ENCODE measurements at regions of chr17 and their contacts with region 1.

Region 1: DNA sequence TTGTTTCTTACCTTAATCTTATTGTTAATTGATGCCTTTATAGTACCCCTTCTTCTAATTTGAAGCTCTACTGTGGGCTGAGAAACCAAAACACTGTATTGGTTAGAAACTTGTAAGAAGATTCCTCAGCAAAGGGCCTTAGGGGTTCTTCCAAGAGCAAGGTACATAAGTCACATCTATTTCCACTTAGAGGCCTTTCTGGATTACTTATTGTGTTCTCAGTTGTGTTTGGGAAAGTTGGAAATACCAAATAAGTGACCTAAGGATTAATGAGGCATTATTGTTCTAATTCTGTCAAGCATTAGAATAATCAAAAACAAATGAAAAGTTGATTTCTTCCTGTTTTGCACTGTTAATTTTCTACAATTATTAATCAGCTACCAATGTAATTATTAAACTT is 85.8 kb downstream of the SKAP1 start:
- DNase-seq: no peak
- H3K4me3 ChIP-seq: no peak overlapping the region
- H3K27ac ChIP-seq: no peak overlapping the region
- H3K4me1 ChIP-seq: no peaks in the 10 kb centered on the region
- H3K27me3 ChIP-seq: no peaks in the 10 kb centered on the region
- CTCF ChIP-seq: no peak
- POLR2A ChIP-seq: no peak

Region 2: DNA sequence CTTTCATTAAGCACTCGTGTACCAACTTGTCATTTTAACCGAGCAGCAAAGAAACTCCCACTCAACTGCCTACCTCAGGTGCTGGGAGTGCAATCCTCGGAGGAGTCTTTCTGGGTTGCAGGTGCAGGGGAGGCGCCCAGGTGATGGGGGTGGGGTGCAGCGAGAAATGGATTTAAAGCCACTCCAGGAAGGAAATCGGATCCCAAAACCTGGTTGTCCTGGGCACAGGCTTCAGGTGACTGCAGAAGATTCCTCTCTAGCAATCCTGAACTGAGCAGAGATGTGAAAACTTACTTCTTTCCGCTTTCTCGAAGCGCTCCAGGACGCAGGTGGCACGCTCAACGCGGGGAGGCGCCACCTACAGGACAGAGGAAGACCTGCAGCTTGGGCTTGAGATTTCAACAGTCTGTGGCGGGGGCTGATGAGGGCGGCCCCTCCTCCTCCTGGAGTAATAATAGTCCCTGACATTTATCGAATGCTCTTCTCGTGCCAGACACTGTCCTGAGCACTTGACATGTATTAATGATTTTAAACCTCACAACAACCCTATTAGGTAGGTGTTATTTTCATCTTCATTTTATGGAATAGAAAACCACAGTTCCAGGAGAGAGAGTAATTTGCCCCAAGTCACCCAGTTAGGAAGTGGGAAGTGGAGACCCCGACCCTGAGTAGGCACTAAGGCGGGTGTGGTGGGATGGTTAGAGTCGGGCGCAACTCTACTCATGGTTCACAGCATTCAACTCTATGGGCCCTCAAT is 113.0 kb after region 1 on chr17:
- intact Hi-C with region 1: loop called in 1 of 2 experiments (anchors 5 kb)
- DNase-seq: peak; percentile 59 to 83 (median 74)
- H3K4me3 ChIP-seq: no peak overlapping the region
- H3K27ac ChIP-seq: no peak overlapping the region
- H3K4me1 ChIP-seq: peaks cover 0 to 11% of the 10 kb centered on the region in 2 donors
- H3K27me3 ChIP-seq: no peaks in the 10 kb centered on the region
- CTCF ChIP-seq: peak; percentile 89 to 98 (median 91)
- POLR2A ChIP-seq: no peak

Region 3: GRCh38 chr17:48593840-48594537 is 249.7 kb after region 1 on chr17:
- intact Hi-C with region 1: loop called (anchors 5 to 10 kb)
- DNase-seq: peak; percentile 77 to 91 (median 84)
- H3K4me3 ChIP-seq: peak overlapping the region in 2 of 4 donors; percentile 41 to 54
- H3K27ac ChIP-seq: peak overlapping the region in 3 of 5 donors; percentile 53 to 66 (median 62)
- H3K4me1 ChIP-seq: peaks cover 0 to 33% of the 10 kb centered on the region in 2 donors
- H3K27me3 ChIP-seq: no peaks in the 10 kb centered on the region
- CTCF ChIP-seq: peak; percentile 88 to 94 (median 92)
- POLR2A ChIP-seq: peak; percentile 22 to 27

Measured in adrenal gland (tissue), 19 donors.